HEK293T (cell line): ENCODE measurements at regions of chr17 and their contacts with region 1.

Region 1: DNA sequence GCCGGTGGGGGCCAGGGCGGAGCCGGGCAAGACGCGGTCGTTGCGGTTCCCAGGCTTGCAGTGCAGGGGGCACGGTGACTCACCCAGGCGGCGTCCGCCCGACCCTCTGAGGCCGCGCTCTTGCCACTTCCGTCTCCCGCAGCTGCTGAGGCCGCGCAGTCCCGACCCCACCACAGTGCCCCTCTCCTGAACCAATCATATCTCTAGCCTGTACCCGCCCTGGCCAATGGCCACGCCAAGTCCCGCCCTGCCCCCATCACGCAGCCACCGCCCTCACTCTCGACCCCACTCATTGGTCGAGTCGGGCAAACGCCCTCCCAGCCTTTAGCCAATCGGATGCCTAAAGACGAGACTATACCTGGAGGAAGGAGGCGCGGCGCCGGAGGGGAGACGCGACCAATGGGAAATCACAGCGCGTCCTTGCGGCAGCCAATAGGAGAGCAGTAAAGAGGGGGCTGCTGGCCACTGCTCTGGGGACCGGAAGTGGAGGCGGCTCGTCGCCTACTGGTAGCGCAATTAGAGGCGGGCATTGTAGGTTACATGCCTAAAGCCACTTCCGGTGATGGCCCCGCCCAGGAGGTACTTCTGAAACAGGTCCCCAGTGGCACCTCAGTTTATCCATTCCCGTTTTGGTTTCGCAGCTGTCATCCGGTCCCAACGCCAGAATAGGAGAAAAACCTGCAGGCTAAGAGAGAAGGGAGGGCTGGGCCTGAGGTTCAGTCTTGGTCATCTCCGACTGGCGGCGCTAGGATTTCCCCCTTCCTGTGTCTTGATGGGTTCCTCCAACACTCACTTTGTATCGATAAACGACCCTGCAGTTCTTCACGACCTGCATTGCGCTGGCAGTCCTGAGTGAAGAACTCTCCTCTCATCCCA is 3.5 kb upstream of the MTMR4 start:
- DNase-seq: peak; percentile 95

Region 2: GRCh38 chr17:58504826-58505521 is 13.0 kb before region 1 on chr17:
- CTCF ChIA-PET with region 1: no interaction called
- POLR2A ChIA-PET with region 1: interaction called, 11 read pairs
- DNase-seq: no peak

Region 3: DNA sequence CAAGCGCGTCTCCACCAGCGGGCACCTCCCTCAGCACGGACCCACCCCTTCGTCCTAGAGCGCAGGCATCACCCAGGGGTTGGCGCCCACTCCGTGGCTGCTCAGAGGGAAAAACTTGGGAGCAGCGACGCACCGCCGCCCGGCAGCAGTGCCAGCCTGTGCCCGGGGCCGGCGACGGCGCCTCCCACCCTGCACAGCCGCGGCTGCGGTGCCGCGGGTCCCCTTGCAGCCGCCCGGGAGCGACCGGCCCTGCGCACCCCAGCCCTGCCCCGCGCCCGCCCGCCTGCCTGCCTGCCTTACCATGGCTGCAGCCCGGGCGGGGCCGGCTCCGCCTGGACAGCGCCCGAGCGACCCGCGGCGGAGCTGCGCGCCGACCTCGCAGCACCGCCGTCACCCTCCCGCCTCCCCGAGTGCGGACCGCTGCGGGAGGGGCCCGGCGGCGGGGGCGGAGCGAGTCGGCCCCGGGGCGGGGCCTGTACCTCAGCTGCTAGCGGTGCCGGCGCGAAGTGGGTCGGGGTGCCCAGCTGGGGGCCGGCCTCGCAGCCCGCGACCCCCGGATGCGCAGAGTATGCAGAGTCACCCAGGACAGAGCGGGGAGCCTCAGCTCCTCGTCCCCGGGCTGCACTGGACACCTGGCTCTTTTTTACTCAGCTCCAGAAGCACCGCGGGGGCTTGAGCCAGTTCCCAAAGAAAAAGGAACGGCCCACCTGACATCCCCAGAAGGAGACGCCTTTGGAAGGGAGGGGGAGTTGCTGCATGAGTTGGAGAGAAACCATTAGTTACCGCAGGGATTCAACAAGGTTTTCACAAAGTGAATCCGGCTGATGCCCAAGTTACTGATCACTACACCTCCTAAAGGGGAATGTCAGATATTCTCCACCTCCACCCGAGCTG is 13.9 kb after region 1 on chr17:
- CTCF ChIA-PET with region 1: interaction called, 9 read pairs
- POLR2A ChIA-PET with region 1: interaction called, 28 read pairs
- DNase-seq: peak; percentile 78